Brain microvascular endothelial cell (primary cell): ENCODE measurements at regions of chr12 and their contacts with region 1.

Region 1: DNA sequence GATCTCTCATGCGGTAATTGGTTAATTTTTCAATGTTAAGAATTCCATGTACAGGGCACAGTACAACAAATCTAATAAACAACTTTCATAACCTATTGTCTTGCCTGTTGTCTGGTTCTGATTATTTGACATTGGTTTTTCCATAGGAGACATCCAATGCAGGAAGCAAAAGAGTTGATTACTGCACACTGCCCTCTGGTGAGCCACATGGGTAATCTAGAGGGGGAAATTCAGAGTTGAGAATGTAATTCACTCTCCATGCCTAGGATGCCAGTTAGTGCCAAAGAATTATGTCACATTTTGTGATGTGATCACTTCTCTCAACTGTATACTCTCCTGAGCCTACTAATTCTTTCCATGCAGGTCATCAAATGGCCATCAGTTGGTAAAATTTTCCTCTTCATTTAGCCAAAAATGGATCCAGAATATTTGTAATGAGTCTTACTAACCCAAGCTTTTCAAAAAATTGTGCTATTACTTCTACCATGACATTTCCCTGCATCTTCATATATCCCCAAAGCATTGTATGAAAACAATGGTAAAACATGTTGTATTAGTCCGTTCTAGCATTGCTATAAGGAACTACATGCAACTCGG is 17.7 kb upstream of the CCDC91 start:
- DNase-seq: peak; percentile 59
- H3K4me3 ChIP-seq: no peak overlapping the region
- H3K27ac ChIP-seq: no peak overlapping the region
- H3K27me3 ChIP-seq: no peaks in the 10 kb centered on the region
- CTCF ChIP-seq: peak; percentile 82

Region 2: DNA sequence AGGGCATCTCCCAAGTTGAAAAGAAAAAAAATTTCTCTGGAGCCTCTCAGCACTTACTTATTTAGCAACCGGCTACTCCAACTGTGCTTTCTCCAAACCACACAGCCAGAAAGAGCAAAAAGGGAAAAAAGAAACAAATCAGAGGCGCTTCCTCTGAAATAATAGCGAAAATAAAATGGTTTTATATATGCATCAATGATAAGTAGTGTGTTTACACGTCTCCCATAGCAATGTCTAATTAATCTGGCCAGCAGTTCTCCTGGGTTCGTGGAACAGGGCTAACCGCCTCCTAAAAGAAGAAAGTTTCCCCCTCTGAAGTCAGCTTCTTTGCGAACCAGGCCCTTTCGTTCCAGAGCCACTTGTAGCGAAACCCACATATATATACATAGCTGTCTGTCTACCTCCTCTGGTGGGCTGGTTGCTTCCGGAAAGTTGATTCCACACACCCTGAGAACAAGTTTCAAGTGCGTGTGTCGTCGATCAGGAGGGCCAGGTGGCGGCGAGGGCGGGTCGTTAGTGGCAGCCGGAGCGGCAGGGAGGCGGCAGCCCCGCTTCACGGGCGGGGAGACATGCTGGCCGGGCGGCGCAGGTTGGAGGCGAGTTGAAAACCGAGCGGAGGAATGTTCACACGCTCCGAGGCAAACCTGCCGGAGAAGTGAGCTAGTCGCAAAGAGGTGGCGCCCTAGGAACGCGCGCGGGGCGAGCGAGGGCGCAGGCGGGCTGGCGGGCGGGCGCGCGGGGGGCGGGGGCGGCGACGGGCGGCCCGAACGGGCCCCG is 202.7 kb before region 1 on chr12:
- in situ Hi-C with region 1: loop called (anchors 25 kb)
- DNase-seq: no peak
- H3K4me3 ChIP-seq: peak overlapping the region; percentile 68
- H3K27ac ChIP-seq: peak overlapping the region; percentile 9
- H3K27me3 ChIP-seq: no peaks in the 10 kb centered on the region
- CTCF ChIP-seq: peak; percentile 3

Region 3: DNA sequence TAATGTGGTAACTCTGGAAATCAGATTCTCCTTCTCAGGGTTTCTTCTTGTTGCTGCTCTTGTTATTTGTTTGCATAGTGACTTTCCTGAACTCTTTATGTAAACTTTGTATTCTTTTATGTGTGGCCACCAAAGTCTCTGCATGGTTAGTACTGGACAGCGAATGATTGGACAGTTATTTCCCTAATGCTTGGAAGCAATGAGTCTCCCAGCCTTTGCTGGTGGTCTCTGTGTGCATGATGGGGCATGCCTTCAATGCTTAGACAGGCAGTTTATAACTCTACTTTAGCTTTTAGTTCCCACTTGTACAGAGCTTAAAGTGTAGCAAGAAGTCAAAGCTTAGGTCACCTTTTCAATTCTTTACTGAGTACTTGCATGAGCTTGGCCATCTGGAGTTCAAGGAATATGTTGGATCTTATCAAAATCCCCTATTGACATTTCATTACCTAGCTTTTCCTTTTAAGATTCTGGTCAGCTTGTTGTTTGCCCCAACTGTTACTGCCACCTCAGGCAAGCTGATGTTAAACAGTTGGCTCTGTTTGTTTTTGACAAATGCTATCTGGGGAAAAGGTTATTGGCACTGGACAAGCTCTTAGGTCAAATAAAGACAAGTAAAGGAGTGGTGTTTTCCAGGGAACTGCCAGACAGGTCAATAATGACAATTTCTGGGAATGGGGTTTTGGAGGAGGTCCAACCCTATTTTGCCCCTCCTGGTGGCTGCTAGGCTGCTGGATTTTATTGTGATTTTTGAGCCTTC is 30.0 kb after region 1 on chr12:
- in situ Hi-C with region 1: no loop called
- DNase-seq: no peak
- H3K4me3 ChIP-seq: no peak overlapping the region
- H3K27ac ChIP-seq: no peak overlapping the region
- H3K27me3 ChIP-seq: no peaks in the 10 kb centered on the region
- CTCF ChIP-seq: peak; percentile 5